ENCODE measurements at regions of chr11 and their contacts with region 1.

Region 1: DNA sequence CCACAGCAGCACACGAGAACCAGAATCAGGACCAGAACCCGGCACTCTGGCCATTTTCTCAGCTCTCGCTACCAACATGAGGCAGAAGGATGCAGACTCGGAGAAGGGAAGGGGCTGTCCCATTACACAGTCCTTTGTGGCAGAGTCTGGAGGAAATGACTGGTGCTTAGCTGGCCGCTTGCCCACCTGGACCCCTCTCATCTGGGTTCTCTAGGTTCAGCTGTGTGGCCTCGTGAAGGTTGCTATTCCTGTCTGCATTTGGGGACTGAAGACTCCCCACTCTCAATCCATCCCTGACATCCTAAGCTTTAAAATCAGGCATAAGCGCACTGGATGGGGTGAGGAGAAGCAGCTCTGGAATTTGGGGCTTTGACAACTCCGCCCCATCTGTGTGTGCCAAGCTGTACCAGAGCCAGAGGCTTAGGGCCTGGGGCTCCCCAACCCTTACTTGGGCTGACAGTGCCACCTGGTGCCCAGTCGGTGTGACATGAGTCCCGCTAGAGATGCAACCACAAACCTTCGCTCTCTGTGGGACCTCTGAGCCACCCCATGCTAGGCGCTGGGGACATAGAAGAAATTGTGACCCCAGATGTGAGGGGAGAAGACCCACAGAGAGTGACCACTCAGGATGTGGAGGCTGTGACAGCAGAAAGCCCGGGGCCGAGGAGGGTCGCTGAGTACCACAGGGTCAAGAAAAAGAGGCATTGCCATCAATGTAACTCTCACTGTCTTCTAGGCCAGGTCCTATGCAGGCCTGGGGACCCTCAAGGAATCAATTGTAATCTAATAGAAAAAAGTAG is 35.9 kb upstream of the FCHSD2 start:
- DNase-seq: peak; percentile 74 to 90 (median 82)
- ATAC-seq: peak; percentile 73 to 94 (median 90)
- H3K4me3 ChIP-seq: no peak overlapping the region
- H3K27ac ChIP-seq: peak overlapping the region in 2 of 4 donors; percentile 36 to 52
- H3K4me1 ChIP-seq: peaks cover 0 to 23% (median 0%) of the 10 kb centered on the region in 3 donors
- H3K27me3 ChIP-seq: no peaks in the 10 kb centered on the region
- CTCF ChIP-seq: peak; percentile 44 to 69 (median 55)

Region 2: GRCh38 chr11:72821883-72822799 is 355.8 kb before region 1 on chr11:
- intact Hi-C with region 1: loop called in 2 of 3 experiments (anchors 5 to 10 kb)
- DNase-seq: peak; percentile 84 to 96 (median 94)
- ATAC-seq: peak; percentile 91 to 92 (median 92)
- H3K4me3 ChIP-seq: peak overlapping the region; percentile 26 to 64 (median 47)
- H3K27ac ChIP-seq: peak overlapping the region in 3 of 4 donors; percentile 39 to 58 (median 55)
- H3K4me1 ChIP-seq: peaks cover 0 to 6% (median 6%) of the 10 kb centered on the region in 3 donors
- H3K27me3 ChIP-seq: no peaks in the 10 kb centered on the region
- CTCF ChIP-seq: peak in 1 of 4 donors; percentile 21

Region 3: DNA sequence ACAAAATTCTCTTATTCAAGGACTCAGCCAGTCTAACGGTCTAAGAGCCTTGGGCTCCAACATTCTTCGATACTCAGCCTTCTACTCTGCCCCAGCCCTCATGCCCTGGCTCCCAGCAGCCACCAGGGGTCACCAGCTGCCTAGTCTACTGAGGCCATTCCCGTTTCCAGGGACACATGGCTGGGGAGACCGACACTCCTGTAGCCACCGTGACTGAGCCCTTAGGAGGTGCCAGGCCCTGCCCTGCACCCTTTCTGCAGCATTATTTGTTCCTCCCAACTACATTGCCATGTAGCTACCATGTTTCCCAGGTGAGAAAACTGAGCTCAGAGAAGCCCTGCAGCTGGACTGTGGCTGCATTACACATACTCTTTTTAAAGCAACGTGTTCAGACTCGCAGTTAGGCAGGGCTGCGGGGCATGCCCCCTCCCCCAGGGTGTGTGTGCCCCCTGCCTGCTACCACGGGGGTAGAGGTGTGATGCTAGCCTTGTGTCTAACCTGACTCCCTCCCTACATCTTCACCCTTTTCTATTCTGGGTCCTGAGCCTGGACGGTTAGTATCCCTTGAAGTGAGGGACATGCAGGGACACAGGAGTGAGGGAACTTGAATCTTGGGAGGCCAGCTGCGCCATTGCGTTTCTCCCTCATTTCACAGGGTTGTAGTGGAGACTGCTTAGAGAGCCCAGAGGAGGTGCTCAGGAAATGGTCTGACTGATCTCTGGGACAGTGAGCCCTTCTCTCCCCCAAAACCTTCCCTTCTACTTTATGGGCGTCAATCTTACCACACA is 346.3 kb before region 1 on chr11:
- intact Hi-C with region 1: loop called (anchors 2 to 10 kb)
- DNase-seq: peak; percentile 76 to 93 (median 84)
- ATAC-seq: peak; percentile 90 to 95 (median 92)
- H3K4me3 ChIP-seq: no peak overlapping the region
- H3K27ac ChIP-seq: no peak overlapping the region
- H3K4me1 ChIP-seq: no peaks in the 10 kb centered on the region
- H3K27me3 ChIP-seq: no peaks in the 10 kb centered on the region
- CTCF ChIP-seq: peak; percentile 84 to 96 (median 92)

Region 4: DNA sequence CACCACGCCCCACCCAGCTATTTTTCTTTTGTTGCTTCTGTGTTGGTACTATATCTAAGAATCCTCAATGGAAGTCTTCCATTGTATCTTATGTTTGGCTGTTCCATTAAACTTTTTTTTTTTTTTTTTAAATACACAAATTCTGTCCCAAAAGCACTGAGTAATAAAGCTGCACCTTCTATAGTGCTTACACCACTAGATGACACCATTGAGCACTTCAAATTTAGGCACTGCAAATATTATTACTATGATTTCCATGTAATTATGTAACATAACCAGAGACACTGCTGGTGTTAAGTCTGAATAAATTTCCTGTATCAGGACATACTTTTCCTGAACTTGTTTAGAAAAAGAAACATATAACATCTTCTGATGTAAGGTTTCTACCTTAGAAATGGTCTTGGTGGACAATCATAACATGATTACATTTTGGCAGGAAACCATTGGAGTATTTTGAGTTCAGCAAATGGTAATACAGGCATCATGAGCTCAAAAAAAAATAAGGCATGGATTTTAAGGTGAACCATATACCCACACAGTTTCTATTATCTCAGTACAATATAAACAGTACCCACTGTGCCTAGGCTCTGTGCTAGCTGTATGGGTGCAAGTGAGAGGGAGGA is 253.3 kb before region 1 on chr11:
- intact Hi-C with region 1: loop called (anchors 5 to 10 kb)
- DNase-seq: no peak
- ATAC-seq: peak; percentile 64 to 92 (median 84)
- H3K4me3 ChIP-seq: no peak overlapping the region
- H3K27ac ChIP-seq: no peak overlapping the region
- H3K4me1 ChIP-seq: peaks cover 0 to 8% (median 0%) of the 10 kb centered on the region in 3 donors
- H3K27me3 ChIP-seq: no peaks in the 10 kb centered on the region
- CTCF ChIP-seq: peak in 3 of 4 donors; percentile 8 to 35 (median 22)

Region 5: DNA sequence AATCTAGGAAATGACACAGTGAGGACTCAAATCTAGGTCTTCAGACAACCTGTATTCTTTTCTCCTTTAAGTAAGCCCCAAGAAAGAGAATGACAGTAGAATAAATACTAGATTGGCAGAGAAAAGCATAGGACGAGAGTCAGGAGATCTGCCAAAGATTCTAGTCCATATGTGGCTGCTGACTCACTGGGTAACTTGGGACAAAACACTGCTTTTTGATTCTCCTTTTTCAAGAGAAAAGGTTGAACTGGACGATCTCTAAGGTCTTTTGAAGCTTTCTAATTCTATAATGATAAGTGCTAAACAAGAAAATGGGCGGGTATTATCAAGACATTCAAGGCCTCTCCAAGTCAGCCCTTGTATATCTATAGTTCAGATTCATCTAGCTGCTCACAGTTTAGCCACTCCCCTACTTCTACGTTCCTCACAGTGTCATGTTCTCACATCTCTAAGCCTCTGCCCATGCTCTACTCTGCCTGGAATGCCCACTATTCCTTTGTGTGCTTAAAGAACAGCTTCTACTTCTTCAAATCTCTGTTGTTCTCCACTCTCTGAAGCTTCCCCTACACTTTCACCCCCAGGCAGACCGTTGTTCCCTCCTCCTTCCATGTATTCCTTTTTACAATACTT is 251.3 kb after region 1 on chr11:
- intact Hi-C with region 1: no loop called
- DNase-seq: no peak
- ATAC-seq: no peak
- H3K4me3 ChIP-seq: no peak overlapping the region
- H3K27ac ChIP-seq: no peak overlapping the region
- H3K4me1 ChIP-seq: no peaks in the 10 kb centered on the region
- H3K27me3 ChIP-seq: no peaks in the 10 kb centered on the region
- CTCF ChIP-seq: no peak